ENCODE measurements at regions of chr16 and their contacts with region 1.

Region 1: DNA sequence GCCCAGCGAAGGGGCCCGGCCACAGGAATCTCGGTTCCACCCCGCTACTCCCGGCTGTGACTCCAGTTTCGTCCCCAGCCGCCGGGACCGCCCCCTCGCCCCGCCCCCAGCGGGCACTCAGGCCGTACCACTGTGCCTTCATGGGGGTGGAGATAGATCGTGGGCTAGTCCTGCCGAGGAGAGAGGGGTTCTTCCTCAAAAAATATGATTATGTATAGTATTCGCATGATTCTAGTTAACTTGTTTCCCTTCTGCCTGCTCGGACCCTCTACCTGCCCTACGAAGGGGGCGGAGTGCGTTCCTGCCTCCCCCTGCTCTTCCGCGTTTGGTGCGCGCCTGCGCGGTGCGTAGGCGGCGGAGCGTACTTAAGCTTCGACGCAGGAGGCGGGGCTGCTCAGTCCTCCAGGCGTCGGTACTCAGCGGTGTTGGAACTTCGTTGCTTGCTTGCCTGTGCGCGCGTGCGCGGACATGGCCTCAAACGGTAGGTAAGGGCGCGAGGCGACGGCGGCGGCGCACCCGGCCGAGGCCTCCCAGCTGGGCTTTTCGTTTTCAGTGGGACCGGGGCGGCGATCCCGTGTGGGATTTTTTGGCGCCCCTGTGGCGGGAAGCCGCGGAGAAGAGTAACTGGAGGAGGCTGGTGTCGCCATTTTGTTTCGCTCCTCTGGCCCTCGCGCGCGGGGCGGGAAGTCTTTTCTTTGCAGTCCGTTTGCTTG is at the start of gene FUS:
- DNase-seq: peak; percentile 98
- total RNA-seq, gene FUS: 168 to 208 TPM

Region 2: DNA sequence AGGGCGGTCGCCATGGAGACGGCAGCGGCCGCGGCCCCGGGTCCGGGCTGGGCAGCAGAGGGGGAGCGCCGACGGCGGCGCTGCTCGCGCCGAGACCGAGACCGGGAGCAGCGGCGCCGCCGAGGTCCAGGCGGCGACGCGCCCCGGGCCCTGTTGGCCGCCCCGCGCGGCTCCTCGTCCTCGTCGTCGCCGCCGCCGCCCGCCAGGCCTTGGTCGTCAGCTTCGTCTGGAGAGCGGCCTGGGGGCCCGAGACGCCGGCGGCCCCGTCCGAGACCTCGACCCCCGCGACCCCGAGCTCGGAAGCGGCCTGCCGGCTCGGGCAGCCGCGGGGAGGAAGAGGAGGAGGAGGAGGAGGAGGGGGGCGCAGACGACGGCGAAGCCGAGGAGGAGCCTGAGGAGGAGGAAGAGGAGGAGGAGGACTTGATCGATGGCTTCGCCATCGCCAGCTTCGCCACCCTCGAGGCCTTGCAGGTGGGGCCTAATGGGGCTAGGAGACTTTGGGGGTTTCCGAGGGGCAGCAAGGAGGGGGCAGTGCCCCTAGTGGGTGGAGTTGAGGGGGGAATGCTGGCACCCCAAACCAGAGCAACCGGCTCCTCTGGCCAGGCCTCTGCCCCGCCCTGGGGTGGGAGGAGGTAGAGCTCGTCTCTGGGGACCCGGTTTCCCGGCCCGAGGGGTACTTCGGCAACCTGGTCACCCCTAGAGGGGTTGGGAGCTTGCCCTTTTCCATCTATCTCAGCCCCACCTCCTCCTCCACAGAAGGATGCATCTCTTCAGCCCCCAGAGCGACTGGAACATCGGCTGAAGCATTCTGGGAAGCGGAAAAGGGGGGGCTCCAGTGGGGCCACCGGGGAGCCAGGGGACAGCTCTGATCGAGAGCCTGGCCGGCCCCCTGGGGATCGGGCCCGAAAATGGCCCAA is 520.1 kb before region 1 on chr16:
- intact Hi-C with region 1: loop called in 1 of 2 experiments (anchors 10 kb)
- DNase-seq: peak; percentile 84

Region 3: GRCh38 chr16:31301708-31302400 is 122.0 kb after region 1 on chr16:
- intact Hi-C with region 1: no loop called
- DNase-seq: no peak

Region 4: DNA sequence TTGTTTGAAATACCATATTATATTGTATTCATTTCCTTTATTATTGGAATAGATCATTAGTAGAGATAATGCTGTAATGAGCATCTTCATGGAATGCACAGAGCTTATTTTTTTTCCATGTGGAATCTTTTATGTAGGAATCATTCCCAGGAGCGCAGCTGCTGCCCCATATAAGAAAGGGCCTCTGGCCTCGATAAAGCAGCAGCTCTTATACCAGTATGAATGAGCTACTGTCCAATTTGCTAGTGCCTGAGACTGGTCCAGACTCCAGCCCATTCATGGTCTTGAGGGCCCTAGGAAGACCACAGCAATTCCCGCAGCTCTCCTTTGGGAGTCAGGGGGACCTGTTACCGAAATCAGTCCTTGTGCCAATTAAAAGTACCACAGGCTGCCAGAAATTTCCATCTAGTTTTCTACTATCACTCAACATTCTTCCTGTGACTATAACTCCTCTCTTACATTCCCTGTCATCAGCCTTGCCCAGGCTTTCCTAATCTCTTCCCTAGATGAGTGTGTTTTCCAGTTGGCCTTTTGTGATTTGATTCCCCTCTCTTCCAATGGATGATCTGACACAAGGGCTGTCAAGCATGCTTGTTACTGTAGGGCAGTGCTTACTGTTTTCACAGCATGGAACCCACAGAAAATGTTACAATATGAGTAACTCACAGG is 260.7 kb after region 1 on chr16:
- intact Hi-C with region 1: loop called (anchors 10 kb)
- DNase-seq: no peak

Measured in posterior vena cava (tissue), 2 donors.